SK-N-SH (cell line): ENCODE measurements at regions of chr6 and their contacts with region 1.

Region 1: GRCh38 chr6:158072083-158072721 is 90.5 kb downstream of the SYNJ2 start:
- DNase-seq: peak; percentile 83
- H3K4me3 ChIP-seq: peak overlapping the region in 1 of 2 experiments; percentile 14; a peak in 1 of 4 replicates
- H3K27ac ChIP-seq: peak overlapping the region in 1 of 2 experiments; percentile 76; a peak in 2 of 4 replicates
- H3K4me1 ChIP-seq: peaks cover 11 to 30% of the 10 kb centered on the region in 2 experiments; a peak in 3 of 4 replicates
- H3K27me3 ChIP-seq: no peaks in the 10 kb centered on the region
- CTCF ChIP-seq: peak; percentile 86
- EP300 ChIP-seq: no peak
- RAD21 ChIP-seq: peak; percentile 92

Region 2: GRCh38 chr6:157756708-157757429 is 315.3 kb before region 1 on chr6:
- CTCF ChIA-PET with region 1: interaction called, 69 read pairs
- POLR2A ChIA-PET with region 1: no interaction called
- DNase-seq: peak; percentile 79
- H3K4me3 ChIP-seq: peak overlapping the region in 1 of 2 experiments; percentile 29; a peak in 1 of 4 replicates
- H3K27ac ChIP-seq: peak overlapping the region in 1 of 2 experiments; percentile 45; a peak in 1 of 4 replicates
- H3K4me1 ChIP-seq: peaks cover 15 to 18% of the 10 kb centered on the region in 2 experiments; a peak in 3 of 4 replicates
- H3K27me3 ChIP-seq: no peaks in the 10 kb centered on the region
- CTCF ChIP-seq: peak; percentile 76
- EP300 ChIP-seq: no peak
- RAD21 ChIP-seq: peak; percentile 84

Region 3: DNA sequence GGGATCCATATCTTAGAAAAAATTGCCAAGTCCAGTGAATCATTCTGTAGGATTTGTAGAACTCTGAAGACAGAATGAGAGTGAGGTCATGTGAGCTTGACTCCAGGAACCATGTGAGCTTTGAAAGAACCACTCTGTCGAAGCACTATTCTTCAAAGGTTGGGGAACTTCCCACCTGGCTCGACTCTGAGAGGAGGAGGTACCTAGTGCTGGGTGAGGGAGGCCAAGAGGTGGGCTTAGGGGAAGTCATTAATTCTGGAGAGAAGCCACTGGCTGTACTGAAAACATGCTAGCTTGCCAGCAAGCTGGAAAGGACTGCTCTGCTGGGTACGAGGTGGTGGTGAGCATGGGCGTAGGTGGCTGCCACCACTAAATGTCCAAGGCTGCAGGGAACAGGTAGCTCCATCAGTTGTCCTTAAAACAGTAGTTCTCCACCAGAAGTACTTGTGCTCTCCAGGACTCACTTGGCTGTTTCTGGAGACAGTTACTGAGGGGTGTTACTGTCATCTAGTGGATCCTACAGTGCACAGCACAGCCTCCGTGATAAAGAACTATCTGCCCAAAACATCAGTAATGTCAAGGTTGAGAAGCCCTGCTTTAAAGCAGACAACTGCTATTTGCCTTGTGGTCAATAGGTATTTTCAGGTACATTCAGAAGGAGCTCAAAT is 125.2 kb before region 1 on chr6:
- CTCF ChIA-PET with region 1: interaction called, 11 read pairs
- POLR2A ChIA-PET with region 1: no interaction called
- DNase-seq: peak; percentile 40
- H3K4me3 ChIP-seq: no peak overlapping the region
- H3K27ac ChIP-seq: no peak overlapping the region
- H3K4me1 ChIP-seq: no peaks in the 10 kb centered on the region
- H3K27me3 ChIP-seq: no peaks in the 10 kb centered on the region
- CTCF ChIP-seq: peak; percentile 55
- EP300 ChIP-seq: no peak
- RAD21 ChIP-seq: peak; percentile 67

Region 4: DNA sequence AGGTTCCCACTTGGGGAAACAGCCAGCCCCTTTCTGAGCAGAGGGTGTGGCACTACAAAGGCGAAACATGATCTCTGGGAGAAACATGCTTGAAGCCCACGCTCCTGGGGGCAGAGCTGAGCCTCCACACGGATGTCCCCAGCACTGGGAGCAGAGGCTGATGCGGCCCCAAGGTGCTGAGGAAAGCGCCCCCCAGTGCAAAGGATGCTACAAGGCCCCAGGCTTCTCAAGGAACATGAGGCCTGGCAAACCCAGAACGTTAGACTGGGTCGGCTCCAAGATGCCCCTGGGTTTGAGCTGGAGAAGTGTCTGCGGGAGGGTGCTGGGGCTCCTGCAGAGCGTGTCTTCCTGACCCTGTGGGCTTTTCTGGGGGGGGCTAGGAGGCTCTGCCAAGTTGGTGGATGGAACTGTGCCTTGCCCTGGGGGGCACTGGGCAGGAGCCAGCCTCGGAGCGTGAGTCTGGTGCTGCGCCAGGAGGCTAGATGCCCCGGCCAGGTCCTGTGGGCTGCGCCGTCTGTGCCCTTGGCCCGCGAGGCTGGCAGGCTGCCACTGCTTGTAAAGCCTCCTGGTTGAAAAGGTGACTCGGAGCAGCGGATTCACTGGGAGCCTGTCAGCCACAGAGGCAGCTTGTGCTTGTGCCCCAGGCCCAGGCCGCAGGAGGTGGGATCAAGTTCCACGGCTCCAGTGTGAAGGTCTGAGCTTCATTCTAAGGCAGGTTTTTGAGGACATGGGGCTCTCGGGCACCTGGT is 82.5 kb before region 1 on chr6:
- CTCF ChIA-PET with region 1: interaction called, 11 read pairs
- POLR2A ChIA-PET with region 1: no interaction called
- DNase-seq: peak; percentile 79
- H3K4me3 ChIP-seq: peak overlapping the region in 1 of 2 experiments; percentile 23; a peak in 2 of 4 replicates
- H3K27ac ChIP-seq: peak overlapping the region; percentile 48 to 78
- H3K4me1 ChIP-seq: peaks cover 33 to 44% of the 10 kb centered on the region in 2 experiments; a peak in 3 of 4 replicates
- H3K27me3 ChIP-seq: no peaks in the 10 kb centered on the region
- CTCF ChIP-seq: peak; percentile 32
- EP300 ChIP-seq: peak; percentile 51 to 78; a peak in 3 of 4 replicates
- RAD21 ChIP-seq: no peak

Region 5: DNA sequence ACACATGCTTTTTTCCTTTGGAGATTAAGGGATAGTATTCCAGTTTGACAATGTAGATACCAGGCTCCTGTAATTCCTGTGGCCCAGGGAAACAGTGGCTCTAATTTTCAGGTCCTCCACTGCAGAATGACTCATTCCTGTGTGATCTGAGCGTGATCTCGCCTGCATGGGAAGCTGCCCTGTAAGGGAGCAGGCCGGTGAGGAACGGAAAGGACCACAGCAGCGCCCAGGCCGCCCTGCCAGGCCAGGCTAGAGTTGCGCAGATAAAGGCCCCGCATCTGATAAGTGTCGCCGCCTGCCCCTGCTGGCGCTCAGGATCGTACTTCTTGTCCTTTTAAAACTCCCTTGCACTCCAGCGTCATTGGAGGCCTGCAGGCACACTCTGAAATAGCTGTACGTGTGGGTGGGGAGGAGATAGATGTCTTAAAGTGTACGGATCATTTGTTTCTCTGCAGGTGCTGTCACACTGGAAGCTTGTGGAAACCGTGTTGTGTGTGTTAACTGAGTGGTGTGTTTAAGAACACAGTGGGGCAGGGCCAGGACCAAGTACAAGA is 29.9 kb before region 1 on chr6:
- CTCF ChIA-PET with region 1: interaction called, 20 read pairs
- POLR2A ChIA-PET with region 1: no interaction called
- DNase-seq: peak; percentile 89
- H3K4me3 ChIP-seq: no peak overlapping the region
- H3K27ac ChIP-seq: peak overlapping the region; percentile 90 to 99
- H3K4me1 ChIP-seq: peaks cover 39 to 44% of the 10 kb centered on the region in 2 experiments
- H3K27me3 ChIP-seq: no peaks in the 10 kb centered on the region
- CTCF ChIP-seq: no peak; the same call in 1 of the 2 replicates
- EP300 ChIP-seq: peak; percentile 60 to 63; a peak in 2 of 4 replicates
- RAD21 ChIP-seq: peak; percentile 53

Region 6: DNA sequence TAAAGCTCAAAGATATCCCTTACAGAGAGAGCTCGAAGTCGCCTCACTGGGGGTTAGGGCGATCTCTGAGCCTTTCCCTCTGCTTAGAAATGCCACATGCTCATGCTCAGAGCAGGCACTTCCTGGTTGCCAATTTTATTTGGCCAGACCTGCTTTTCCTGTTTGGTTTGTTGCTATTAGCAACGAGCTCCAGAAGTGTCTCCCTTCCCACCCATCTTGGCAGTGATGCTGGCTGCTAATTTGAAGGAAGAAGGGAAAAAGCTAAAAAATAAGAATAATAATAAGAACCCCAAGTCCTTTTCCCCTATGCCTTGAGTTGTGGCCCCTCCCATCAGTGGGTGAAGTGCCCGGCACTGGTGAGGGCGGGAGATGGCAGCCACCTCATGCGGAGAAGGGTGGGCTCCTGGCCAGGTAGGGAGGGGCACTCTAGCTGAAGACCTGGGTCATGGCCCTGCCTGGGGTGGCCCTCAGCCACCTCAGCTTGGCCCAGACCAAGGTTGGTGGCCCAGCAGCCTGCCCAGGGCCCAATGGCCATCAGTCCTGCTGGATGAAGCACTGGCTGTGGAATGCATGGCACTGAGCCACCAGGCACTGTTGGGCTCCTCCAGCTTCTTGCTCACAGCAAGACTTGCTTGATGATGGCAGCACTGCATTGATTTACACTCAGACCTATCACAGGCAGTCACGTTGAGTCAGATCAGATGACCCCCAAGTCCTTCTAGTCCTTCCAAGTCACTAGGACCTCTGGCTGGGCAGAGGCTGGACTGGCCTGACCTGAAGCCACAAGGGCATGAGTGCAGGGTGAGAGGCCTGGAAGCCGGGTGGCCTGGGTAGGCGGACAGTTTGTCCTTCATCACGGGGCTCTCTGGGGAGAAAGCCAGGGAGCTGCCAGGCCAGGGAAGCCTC is 11.5 kb before region 1 on chr6:
- CTCF ChIA-PET with region 1: interaction called, 35 read pairs
- POLR2A ChIA-PET with region 1: interaction called, 3 read pairs
- DNase-seq: peak; percentile 60
- H3K4me3 ChIP-seq: no peak overlapping the region
- H3K27ac ChIP-seq: peak overlapping the region; percentile 51 to 99
- H3K4me1 ChIP-seq: peaks cover 14 to 39% of the 10 kb centered on the region in 2 experiments; a peak in 3 of 4 replicates
- H3K27me3 ChIP-seq: no peaks in the 10 kb centered on the region
- CTCF ChIP-seq: no peak
- EP300 ChIP-seq: peak in 1 of 2 experiments; percentile 70; a peak in 1 of 4 replicates
- RAD21 ChIP-seq: no peak

Region 7: DNA sequence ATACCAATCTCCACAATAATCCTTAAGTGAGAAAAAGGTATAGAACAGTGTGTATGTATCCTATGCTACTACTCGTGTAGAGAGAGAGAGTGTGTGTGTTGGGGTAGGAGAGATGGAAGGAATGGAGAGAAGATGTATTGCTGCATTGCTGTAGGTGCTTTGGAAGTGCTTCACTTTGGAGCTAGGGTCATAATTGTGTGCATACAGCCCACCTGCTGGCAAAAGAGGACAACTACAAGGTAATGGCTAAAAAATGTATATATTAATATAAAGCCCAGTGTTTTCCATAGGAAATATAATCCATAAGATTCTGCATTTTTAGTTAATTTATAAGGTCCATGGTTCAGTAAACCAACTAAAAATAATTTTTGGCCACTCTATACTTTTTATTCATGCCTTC is 59.7 kb after region 1 on chr6:
- CTCF ChIA-PET with region 1: interaction called, 25 read pairs
- POLR2A ChIA-PET with region 1: no interaction called
- DNase-seq: peak; percentile 62
- H3K4me3 ChIP-seq: no peak overlapping the region
- H3K27ac ChIP-seq: no peak overlapping the region
- H3K4me1 ChIP-seq: no peaks in the 10 kb centered on the region
- H3K27me3 ChIP-seq: no peaks in the 10 kb centered on the region
- CTCF ChIP-seq: peak; percentile 67
- EP300 ChIP-seq: no peak
- RAD21 ChIP-seq: peak; percentile 85

Region 8: DNA sequence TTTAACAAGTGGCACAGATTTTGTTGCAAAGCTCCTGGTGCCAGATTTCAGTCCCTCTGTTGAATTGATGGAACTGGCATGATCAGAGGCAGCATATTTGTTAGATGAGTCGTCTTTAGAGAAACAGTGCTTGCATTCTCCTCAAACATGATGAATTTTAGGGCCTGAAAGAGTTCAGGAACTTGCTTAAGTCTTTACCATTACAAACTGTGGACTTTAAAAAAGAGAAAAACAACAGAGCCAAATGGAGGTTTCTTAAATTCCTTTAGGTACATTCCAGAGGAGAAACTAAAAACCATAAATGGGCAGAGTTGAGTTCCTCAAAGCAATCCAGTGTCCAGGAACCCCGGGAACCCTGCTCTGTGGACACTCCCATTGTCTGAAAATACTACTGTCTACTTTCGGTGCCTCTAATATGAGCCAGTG is 98.5 kb after region 1 on chr6:
- CTCF ChIA-PET with region 1: no interaction called
- POLR2A ChIA-PET with region 1: no interaction called
- DNase-seq: no peak
- H3K4me3 ChIP-seq: peak overlapping the region in 1 of 2 experiments; percentile 0; a peak in 2 of 4 replicates
- H3K27ac ChIP-seq: peak overlapping the region; percentile 74 to 84
- H3K4me1 ChIP-seq: peaks cover 2 to 20% of the 10 kb centered on the region in 2 experiments
- H3K27me3 ChIP-seq: no peaks in the 10 kb centered on the region
- CTCF ChIP-seq: no peak
- EP300 ChIP-seq: peak in 1 of 2 experiments; percentile 53; a peak in 2 of 4 replicates
- RAD21 ChIP-seq: no peak

Region 9: DNA sequence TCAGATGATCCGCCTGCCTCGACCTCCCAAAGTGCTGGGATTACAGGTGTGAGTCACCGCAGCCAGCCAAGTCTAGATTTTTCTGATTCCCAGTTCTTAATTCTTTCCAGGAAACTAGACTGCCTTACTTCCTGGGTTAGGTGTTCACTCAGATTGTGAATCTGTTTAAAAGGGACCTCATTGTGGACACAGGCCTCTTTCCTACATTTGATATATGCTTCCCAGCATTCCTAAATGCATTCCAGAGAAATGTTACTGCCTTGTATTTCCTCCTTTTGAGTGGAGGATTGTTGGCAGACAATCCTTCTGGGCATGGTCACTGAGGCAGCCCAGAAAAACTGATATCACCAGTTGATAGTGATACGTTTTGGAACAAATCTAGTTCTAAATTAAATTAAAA is 503.3 kb after region 1 on chr6:
- CTCF ChIA-PET with region 1: no interaction called
- POLR2A ChIA-PET with region 1: no interaction called
- DNase-seq: no peak
- H3K4me3 ChIP-seq: no peak overlapping the region
- H3K27ac ChIP-seq: no peak overlapping the region
- H3K4me1 ChIP-seq: peaks cover 0 to 6% of the 10 kb centered on the region in 2 experiments; a peak in 1 of 4 replicates
- H3K27me3 ChIP-seq: no peaks in the 10 kb centered on the region
- CTCF ChIP-seq: no peak
- EP300 ChIP-seq: no peak
- RAD21 ChIP-seq: no peak